Aorta (tissue), 5 donors: ENCODE measurements at regions of chr9 and their contacts with region 1.

Region 1: GRCh38 chr9:136245219-136246150 is at the start of gene QSOX2:
- DNase-seq: peak; percentile 88 to 94
- ATAC-seq: peak; percentile 89
- H3K4me3 ChIP-seq: peak within 1 kb of the TSS; percentile 74 to 75
- H3K27ac ChIP-seq: no peak within 1 kb of the TSS
- H3K4me1 ChIP-seq: no peaks in the 10 kb centered on the region
- H3K27me3 ChIP-seq: no peaks in the 10 kb centered on the region
- total RNA-seq, gene QSOX2: 6.8 to 7.9 TPM

Region 2: DNA sequence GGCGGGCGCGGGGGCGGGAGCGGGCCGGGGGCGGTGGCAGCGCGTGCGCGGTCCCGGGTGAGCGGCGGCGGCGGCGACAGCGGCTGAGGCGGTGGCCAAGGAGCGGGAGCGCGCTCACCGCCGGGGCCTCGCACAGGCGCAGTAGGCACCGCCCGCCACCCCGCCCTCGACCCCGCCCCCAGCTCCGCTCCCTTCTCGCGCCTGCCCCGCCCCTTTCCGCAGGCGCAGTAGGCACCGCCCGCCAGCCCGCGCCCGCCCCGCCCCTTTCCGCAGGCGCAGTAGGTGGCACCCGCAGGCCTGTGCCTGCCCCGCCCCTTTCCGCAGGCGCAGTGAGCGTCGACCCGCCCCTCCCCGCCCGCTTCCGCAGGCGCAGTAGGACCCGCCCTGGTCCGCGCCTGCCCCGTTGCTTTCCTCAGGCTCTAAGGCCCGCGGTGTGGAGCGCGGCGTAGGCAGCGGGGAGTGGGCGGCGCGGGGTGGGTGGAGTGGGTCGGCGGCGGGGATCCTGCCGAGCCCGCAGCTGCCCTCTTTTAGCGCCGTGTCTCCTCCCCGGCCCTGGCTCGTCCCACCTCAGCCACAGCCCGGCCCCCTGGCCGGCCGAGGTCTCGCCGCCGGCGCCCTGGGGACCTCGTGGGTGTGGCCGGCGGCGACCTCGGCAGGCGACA is 337.9 kb before region 1 on chr9 and contains the start of gene CAMSAP1:
- intact Hi-C with region 1: loop called in 1 of 2 experiments (anchors 10 kb)
- DNase-seq: peak; percentile 95 to 97
- ATAC-seq: peak; percentile 99
- H3K4me3 ChIP-seq: peak within 1 kb of the TSS; percentile 85 to 98
- H3K27ac ChIP-seq: peak within 1 kb of the TSS in 1 of 2 donors; percentile 23
- H3K4me1 ChIP-seq: no peaks in the 10 kb centered on the region
- H3K27me3 ChIP-seq: no peaks in the 10 kb centered on the region
- total RNA-seq, gene CAMSAP1: 26.4 to 28.0 TPM

Region 3: DNA sequence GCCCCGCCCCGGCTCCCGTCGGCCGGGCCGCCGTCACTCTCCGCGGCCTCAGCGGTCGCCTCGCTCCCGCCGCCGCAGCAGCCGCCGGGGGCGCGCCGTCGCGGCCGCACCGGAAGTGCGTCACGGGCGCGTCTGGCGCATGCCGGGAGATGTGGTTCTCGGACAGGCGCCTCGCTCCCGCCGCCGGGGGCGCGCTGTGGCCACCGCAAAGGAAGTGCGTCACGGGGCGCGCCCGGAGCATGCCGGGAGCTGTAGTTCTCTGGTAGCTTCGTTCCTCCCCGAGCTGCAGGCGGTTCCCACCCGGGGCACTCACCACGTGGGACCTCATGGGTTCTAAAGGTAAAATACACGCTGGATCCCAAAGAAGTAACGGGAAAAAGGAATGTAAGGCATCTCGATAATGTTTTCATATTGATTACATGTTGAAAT is 284.2 kb before region 1 on chr9 and contains the start of gene UBAC1:
- intact Hi-C with region 1: loop called in 1 of 2 experiments (anchors 10 kb)
- DNase-seq: peak; percentile 98 to 99
- ATAC-seq: peak; percentile 96
- H3K4me3 ChIP-seq: peak within 1 kb of the TSS; percentile 80 to 95
- H3K27ac ChIP-seq: peak within 1 kb of the TSS in 1 of 2 donors; percentile 50
- H3K4me1 ChIP-seq: no peaks in the 10 kb centered on the region
- H3K27me3 ChIP-seq: no peaks in the 10 kb centered on the region
- total RNA-seq, gene UBAC1: 24.1 to 38.0 TPM

Region 4: GRCh38 chr9:136204838-136205706 is 40.4 kb before region 1 on chr9 and contains the start of gene LHX3:
- intact Hi-C with region 1: no loop called
- DNase-seq: no peak
- ATAC-seq: peak; percentile 20
- H3K4me3 ChIP-seq: no peak within 1 kb of the TSS
- H3K27ac ChIP-seq: no peak within 1 kb of the TSS
- H3K4me1 ChIP-seq: no peaks in the 10 kb centered on the region
- H3K27me3 ChIP-seq: no peaks in the 10 kb centered on the region
- total RNA-seq, gene LHX3: not detected

Region 5: DNA sequence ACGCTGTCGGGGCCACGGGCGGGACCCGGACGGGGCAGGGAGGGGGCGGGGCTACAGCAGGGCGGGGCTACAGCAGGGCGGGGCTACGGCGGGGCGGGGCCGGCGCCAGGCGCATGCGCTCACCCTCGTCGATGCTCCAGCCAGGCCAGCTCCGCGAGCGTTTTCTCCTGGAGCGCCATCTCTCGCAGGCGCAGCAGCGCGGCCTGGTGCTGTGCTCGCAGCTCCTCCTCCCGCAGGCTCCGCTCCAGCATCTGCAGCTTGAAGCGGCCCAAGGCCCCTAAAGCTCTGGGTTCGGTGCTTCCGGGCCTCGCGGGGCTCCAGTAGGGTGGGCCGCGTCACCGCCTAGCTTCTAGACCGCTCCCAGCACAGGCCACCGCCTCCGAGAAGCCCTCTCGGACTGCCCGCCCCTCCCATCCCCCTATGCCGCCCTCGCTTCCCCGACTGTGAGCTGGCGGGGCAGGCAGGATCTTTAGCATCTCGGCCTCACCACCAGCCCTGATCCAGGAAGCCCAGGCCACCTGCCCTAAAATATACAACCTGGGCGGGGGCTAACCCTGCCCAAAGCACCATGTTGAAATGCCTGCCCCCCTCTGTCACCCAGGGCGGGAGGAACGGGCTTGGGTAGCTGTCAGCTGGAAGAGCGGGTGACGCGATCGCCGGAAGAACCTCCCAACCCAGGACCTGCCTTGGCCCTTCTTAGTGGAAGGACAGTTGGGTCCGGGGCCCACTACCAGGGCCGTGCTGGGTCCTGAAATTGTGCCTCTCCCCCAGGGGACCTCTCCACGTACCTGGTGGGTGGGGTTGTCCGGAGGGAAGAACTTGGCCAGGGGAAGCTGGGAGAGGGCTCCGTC is 22.0 kb after region 1 on chr9:
- intact Hi-C with region 1: loop called in 1 of 2 experiments (anchors 1 kb)
- DNase-seq: peak; percentile 90 to 92
- ATAC-seq: peak; percentile 94
- H3K4me3 ChIP-seq: no peak overlapping the region
- H3K27ac ChIP-seq: no peak overlapping the region
- H3K4me1 ChIP-seq: no peaks in the 10 kb centered on the region
- H3K27me3 ChIP-seq: no peaks in the 10 kb centered on the region